ENCODE measurements at regions of chr6 and their contacts with region 1.

Region 1: GRCh38 chr6:2911171-2911570 is 8.1 kb upstream of the SERPINB9 start:
- DNase-seq: no peak
- ATAC-seq: no peak
- H3K4me3 Mint-ChIP-seq: no peak overlapping the region
- H3K27ac Mint-ChIP-seq: no peak overlapping the region
- H3K4me1 Mint-ChIP-seq: peaks cover 41% of the 10 kb centered on the region
- H3K27me3 Mint-ChIP-seq: no peaks in the 10 kb centered on the region

Region 2: GRCh38 chr6:2891768-2892170 is 19.4 kb before region 1 on chr6:
- CTCF ChIA-PET with region 1: interaction called, 43 read pairs
- POLR2A ChIA-PET with region 1: no interaction called
- DNase-seq: peak; percentile 78
- ATAC-seq: peak; percentile 92
- H3K4me3 Mint-ChIP-seq: peak overlapping the region; percentile 67
- H3K27ac Mint-ChIP-seq: peak overlapping the region; percentile 78
- H3K4me1 Mint-ChIP-seq: peaks cover 37% of the 10 kb centered on the region
- H3K27me3 Mint-ChIP-seq: no peaks in the 10 kb centered on the region

Region 3: GRCh38 chr6:2900821-2901644 is 10.1 kb before region 1 on chr6:
- CTCF ChIA-PET with region 1: interaction called, 43 read pairs
- POLR2A ChIA-PET with region 1: interaction called, 5 read pairs
- DNase-seq: peak; percentile 21
- ATAC-seq: no peak
- H3K4me3 Mint-ChIP-seq: peak overlapping the region; percentile 94
- H3K27ac Mint-ChIP-seq: peak overlapping the region; percentile 62
- H3K4me1 Mint-ChIP-seq: peaks cover 53% of the 10 kb centered on the region
- H3K27me3 Mint-ChIP-seq: no peaks in the 10 kb centered on the region

Region 4: DNA sequence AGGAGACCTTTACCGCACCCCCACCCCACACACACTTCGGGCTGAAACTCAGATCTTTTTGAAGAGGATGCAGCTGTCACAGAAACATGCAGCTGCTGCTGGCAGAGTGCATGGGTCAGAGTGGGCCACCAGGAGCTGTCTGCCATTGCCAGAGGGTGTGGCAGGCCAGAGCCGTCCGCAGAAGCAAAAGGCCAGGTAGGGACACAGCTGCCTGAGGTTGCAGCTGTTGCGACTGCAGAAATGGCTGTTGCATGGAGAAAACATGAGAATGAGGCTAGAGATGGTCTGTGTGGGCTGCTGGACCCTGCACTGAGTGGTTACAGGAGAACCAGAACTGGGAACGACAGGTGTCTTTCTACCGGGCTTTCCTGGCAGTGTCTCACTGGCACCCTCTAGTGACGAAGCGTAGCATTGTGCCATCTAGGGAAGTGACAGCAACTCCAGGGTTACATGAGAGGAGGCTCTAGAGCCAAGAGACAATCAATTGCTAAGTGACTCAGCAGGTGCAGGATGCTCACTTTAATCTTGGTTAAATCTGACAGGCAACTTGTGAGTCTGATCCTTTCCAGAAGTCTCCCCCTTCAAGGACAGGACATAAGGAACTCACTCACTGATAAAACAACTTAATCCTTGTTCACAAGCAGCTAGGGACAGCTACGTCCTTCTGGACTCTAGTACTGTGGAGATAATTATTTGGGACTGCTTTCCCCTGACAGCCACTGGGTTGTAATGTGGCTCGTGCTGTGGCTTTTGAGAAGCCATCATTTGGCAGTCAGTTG is 21.0 kb after region 1 on chr6:
- CTCF ChIA-PET with region 1: interaction called, 11 read pairs
- POLR2A ChIA-PET with region 1: no interaction called
- DNase-seq: peak; percentile 91
- ATAC-seq: peak; percentile 91
- H3K4me3 Mint-ChIP-seq: no peak overlapping the region
- H3K27ac Mint-ChIP-seq: no peak overlapping the region
- H3K4me1 Mint-ChIP-seq: peaks cover 22% of the 10 kb centered on the region
- H3K27me3 Mint-ChIP-seq: no peaks in the 10 kb centered on the region